AG04450 (cell line): ENCODE measurements at regions of chr17 and their contacts with region 1.

Region 1: DNA sequence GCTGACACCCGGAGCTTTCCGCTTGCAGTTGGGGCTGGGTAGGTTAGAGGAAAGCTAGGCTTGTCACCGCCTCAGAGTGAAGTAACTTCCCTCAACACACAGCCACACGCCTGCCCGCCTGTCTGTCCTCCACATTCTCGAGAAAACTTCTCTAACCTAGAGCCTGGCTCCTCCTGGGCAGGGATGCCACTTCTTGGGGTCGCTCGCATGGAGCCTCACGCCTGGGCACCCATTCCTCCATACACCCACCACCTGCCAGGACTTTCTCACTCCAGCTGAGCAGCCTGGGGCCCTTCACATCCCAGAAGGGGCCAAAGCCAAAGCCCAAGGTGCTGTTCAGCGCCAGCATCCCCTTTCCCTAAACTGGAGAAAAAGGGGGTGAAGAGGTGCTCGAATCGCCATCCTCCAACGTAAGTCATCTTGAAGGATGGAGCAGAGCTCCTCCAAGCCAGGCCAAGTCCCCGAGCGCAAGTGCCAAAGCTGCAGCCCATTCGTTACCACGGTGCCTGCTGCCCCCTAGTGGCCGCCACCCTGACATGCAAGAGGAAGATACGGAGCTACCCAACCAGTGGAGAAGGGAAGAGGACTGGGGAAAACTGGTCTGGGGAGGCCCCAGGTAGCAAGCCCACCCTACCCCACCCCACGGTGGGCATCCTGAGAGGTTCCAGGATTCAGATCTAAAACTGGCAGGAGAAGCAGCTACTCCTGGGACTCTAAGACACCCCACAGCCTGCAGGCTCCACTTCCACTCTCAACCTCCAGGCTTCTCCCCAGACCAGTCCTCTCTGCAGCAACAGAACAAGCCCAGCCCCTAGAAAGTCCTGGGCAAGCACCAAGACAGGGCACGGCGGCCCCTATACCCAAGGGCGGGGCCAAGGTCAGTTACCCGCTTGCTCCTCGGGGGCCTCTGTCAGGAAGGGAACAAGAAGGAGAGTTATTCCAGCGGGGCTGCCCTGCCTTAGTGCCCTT is 63.1 kb downstream of the MYO18A start:
- DNase-seq: no peak
- H3K4me3 ChIP-seq: no peak overlapping the region
- H3K27ac ChIP-seq: no peak overlapping the region
- H3K27me3 ChIP-seq: no peaks in the 10 kb centered on the region
- CTCF ChIP-seq: peak; percentile 83

Region 2: GRCh38 chr17:28951991-28952975 is 164.8 kb before region 1 on chr17:
- CTCF ChIA-PET with region 1: interaction called, 13 read pairs
- POLR2A ChIA-PET with region 1: interaction called, 3 read pairs
- DNase-seq: peak; percentile 99
- H3K4me3 ChIP-seq: peak overlapping the region; percentile 77
- H3K27ac ChIP-seq: peak overlapping the region; percentile 98
- H3K27me3 ChIP-seq: no peaks in the 10 kb centered on the region
- CTCF ChIP-seq: no peak

Region 3: DNA sequence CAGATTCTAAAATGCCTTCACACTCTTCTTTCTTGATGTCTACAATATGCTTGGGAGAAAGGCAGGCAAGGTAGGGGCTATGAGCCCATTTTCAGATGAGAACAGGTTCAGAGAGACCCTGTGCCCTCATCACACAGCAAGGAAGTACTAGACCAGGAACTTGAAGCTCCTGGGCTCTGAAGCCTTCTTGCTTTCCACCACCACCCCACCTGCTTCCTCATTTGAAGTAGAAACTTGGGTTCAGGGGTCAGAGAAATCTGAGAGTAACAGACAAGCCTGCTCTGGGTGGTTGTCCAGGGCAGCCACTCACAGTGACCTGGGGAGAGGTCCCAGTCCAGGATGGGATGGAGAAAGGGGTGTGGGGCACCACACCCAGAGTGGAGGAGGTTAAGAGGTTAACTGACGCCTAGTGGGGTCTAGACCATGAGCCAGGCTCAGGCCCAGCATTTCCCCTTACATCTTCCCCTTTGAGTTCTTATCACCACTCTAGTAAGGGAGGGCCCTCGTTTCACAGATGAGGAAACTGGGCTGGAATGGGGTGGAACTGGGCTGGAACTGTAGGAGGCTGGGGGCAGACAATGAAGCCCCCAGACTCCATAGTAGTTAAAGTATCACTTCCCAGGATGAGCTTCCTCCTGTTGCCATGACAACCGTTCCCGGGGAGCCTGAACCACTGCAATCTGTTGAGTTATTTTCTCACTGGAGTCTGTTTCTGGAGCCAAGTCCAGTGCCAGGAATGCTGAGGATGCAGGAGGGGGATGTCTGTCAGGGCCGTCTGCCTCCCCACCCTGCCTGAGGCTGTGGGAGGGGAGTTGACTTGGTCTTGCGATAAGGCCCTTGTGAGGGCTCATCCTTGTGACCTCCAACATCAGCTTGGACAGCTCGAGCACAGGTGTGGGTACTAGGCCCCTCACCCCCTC is 149.6 kb before region 1 on chr17:
- CTCF ChIA-PET with region 1: interaction called, 218 read pairs
- POLR2A ChIA-PET with region 1: interaction called, 8 read pairs
- DNase-seq: no peak
- H3K4me3 ChIP-seq: no peak overlapping the region
- H3K27ac ChIP-seq: no peak overlapping the region
- H3K27me3 ChIP-seq: peaks cover 34% of the 10 kb centered on the region
- CTCF ChIP-seq: no peak

Region 4: DNA sequence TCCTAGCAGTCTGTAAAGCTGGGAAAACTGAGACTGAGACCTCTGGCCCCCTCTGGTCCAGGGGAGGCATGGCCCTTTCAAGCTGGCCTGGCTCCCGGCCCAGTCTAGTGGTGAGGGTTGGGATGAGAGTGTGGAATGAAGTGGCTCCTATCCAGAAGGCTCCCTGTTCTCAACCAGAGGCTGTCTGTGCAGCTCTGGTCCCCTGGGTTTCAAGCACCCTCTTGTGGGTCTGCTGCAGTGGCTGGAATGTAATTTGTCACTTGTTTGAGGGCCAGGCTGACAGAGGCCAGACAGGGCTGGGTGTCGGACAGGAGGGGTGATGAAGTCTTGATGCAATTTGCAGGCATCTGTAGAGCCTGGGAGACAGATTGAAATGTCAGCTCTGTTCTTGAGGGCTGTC is 143.7 kb before region 1 on chr17:
- CTCF ChIA-PET with region 1: interaction called, 31 read pairs
- POLR2A ChIA-PET with region 1: no interaction called
- DNase-seq: no peak
- H3K4me3 ChIP-seq: no peak overlapping the region
- H3K27ac ChIP-seq: no peak overlapping the region
- H3K27me3 ChIP-seq: peaks cover 73% of the 10 kb centered on the region
- CTCF ChIP-seq: peak; percentile 30; the same call in 1 of the 2 replicates

Region 5: GRCh38 chr17:29078183-29079045 is 38.7 kb before region 1 on chr17:
- CTCF ChIA-PET with region 1: interaction called, 11 read pairs
- POLR2A ChIA-PET with region 1: no interaction called
- DNase-seq: no peak
- H3K4me3 ChIP-seq: no peak overlapping the region
- H3K27ac ChIP-seq: no peak overlapping the region
- H3K27me3 ChIP-seq: no peaks in the 10 kb centered on the region
- CTCF ChIP-seq: no peak

Region 6: GRCh38 chr17:29133146-29133713 is 16.1 kb after region 1 on chr17:
- CTCF ChIA-PET with region 1: interaction called, 28 read pairs
- POLR2A ChIA-PET with region 1: no interaction called
- DNase-seq: no peak
- H3K4me3 ChIP-seq: no peak overlapping the region
- H3K27ac ChIP-seq: peak overlapping the region; percentile 96
- H3K27me3 ChIP-seq: no peaks in the 10 kb centered on the region
- CTCF ChIP-seq: no peak

Region 7: DNA sequence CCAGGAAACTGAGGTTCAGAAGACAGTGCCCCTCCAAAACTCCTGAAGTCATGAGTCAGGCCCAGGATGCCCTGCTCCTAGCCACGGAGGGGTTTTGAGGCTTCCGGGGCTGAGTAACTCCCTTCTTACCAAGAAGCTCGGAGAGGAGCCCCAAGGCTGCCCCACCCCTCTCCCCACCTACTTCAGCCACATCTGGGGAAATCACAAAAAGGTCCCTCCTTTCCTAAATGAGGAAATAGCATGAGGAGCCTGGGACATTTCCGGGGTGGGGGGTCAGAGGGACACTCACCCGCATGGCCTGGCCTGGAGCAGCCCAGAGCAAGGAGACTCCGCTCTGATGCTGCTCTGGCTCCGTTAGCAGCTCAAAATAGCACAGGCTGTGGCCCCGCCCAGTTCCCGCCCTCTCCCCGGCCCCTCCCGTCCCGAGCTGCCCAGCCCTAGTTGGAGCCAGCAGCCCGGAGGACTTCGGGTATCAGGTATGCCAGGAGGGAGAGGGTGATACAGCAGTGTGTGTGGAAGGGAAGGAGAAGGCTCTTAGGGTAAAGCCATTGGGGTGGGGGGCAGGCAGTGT is 23.0 kb after region 1 on chr17:
- CTCF ChIA-PET with region 1: interaction called, 20 read pairs
- POLR2A ChIA-PET with region 1: no interaction called
- DNase-seq: no peak
- H3K4me3 ChIP-seq: peak overlapping the region; percentile 53
- H3K27ac ChIP-seq: peak overlapping the region; percentile 70
- H3K27me3 ChIP-seq: no peaks in the 10 kb centered on the region
- CTCF ChIP-seq: no peak